ENCODE measurements at regions of chr19 and their contacts with region 1.

Region 1: GRCh38 chr19:55653758-55654539 is 886 bp upstream of the U2AF2 start:
- DNase-seq: peak; percentile 100
- H3K4me3 Mint-ChIP-seq: peak overlapping the region; percentile 88
- H3K27ac Mint-ChIP-seq: peak overlapping the region; percentile 99
- H3K4me1 Mint-ChIP-seq: peaks cover 42% of the 10 kb centered on the region
- H3K27me3 Mint-ChIP-seq: peaks cover 1% of the 10 kb centered on the region

Region 2: DNA sequence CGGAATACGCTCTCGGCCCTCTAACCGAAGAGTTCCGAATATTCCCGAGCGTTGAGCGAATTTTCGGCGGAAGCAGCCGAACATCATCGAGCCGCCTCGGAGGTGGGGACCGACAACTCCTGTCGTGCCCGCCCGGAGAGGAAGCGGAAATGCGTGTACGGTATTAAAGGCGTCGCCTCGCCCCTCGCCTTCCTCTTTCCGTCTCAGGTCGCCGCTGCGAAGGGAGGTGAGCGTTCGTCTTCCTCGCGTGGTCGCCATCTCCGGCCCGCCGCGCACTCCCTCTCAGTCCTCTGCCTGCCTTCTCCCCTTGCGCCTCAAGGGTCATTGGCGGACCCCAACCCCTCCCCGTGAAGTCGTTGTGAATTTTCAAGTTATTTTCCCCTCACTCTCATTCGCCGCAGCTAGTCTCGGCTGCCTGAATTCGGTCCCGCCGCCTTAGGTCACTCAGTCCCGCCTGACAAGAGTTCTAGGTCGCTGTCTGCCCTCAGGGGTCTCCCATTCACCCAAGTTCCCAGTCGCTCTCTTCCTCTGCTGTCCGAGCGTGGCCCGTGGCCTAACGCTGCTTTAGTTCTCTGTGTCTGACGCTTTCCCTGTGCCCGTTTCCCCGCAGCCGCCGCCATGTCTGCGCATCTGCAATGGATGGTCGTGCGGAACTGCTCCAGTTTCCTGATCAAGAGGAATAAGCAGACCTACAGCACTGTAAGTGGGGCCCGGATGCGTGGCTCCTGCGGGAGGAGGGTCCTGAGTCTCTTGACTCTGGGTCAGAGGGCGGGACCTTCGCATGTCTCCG is 268.0 kb before region 1 on chr19 and contains the start of gene RPL28:
- intact Hi-C with region 1: loop called (anchors 1 kb)
- DNase-seq: peak; percentile 100
- H3K4me3 Mint-ChIP-seq: peak within 1 kb of the TSS; percentile 97
- H3K27ac Mint-ChIP-seq: peak within 1 kb of the TSS; percentile 98
- H3K4me1 Mint-ChIP-seq: peaks cover 52% of the 10 kb centered on the region
- H3K27me3 Mint-ChIP-seq: no peaks in the 10 kb centered on the region
- total RNA-seq, gene RPL28: 1,992 and 2,022 TPM in 2 replicates

Region 3: DNA sequence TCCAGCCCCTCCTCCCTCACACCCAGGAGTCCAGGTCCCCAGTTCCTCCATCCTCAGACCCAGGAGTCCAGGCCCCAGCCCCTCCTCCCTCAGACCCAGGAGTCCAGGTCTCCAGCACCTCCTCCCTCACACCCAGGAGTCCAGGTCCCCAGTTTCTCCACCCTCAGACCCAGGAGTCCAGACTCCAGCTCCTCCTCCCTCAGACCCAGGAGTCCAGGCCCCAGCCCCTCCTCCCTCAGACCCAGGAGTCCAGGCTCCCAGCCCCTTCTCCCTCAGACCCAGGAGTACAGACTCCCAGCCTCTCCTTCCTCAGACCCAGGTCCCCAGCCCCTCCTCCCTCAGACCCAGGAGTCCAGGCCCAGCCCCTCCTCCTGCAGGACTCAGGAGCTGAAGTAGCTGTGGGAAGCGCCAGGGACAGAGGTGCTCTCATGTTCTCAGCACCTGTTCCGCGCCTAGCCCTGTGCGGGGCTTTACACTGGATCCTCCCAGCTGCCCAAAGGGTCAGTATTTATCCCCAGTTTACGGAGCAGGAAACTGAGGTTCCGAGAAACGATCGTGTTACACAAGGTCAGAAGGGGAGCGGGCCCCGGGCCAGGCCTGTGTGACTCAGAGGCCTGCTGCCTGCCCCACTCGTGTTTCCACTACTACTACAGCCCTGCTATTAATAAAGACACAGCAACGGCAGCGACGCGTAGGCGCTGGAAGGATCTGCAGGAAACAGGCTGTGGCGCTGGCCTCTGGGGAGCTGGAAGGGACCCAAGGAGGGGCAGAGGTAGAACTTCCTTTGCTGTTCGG is 106.9 kb before region 1 on chr19:
- intact Hi-C with region 1: no loop called
- DNase-seq: no peak
- H3K4me3 Mint-ChIP-seq: no peak overlapping the region
- H3K27ac Mint-ChIP-seq: no peak overlapping the region
- H3K4me1 Mint-ChIP-seq: peaks cover 3% of the 10 kb centered on the region
- H3K27me3 Mint-ChIP-seq: peaks cover 3% of the 10 kb centered on the region

Region 4: DNA sequence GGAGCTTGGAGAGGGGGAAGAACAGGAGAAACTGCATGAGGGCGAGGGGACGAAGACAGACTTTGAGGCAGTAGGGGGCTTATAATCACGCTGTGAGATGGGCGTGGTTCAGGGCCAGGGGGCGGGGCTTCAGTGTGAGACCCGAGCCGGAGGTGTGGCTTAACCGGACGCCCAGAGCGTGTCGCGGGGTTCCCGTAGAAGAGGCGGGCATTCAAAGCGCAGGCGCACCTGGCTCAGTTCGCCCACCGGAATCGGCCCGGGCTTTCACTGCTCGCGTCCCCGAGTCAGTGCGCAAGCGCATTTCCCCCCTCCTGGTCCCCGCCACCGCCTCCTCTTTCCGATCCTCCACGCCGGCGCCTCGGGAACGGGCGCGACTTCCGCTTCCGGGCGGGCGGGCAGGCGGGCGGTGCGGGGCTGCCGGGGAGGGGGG is 48.7 kb before region 1 on chr19:
- intact Hi-C with region 1: loop called (anchors 1 kb)
- DNase-seq: peak; percentile 100
- H3K4me3 Mint-ChIP-seq: peak overlapping the region; percentile 85
- H3K27ac Mint-ChIP-seq: peak overlapping the region; percentile 93
- H3K4me1 Mint-ChIP-seq: peaks cover 46% of the 10 kb centered on the region
- H3K27me3 Mint-ChIP-seq: peaks cover 3% of the 10 kb centered on the region

Region 5: GRCh38 chr19:55632463-55632834 is 21.5 kb before region 1 on chr19:
- intact Hi-C with region 1: loop called (anchors 1 kb)
- DNase-seq: peak; percentile 97
- H3K4me3 Mint-ChIP-seq: no peak overlapping the region
- H3K27ac Mint-ChIP-seq: peak overlapping the region; percentile 3
- H3K4me1 Mint-ChIP-seq: peaks cover 38% of the 10 kb centered on the region
- H3K27me3 Mint-ChIP-seq: peaks cover 13% of the 10 kb centered on the region

Region 6: GRCh38 chr19:55674841-55675660 is 21.1 kb after region 1 on chr19 and contains the start of gene EPN1:
- intact Hi-C with region 1: loop called (anchors 1 kb)
- DNase-seq: peak; percentile 99
- H3K4me3 Mint-ChIP-seq: peak within 1 kb of the TSS; percentile 95
- H3K27ac Mint-ChIP-seq: peak within 1 kb of the TSS; percentile 90
- H3K4me1 Mint-ChIP-seq: peaks cover 52% of the 10 kb centered on the region
- H3K27me3 Mint-ChIP-seq: no peaks in the 10 kb centered on the region
- total RNA-seq, gene EPN1: 44.7 and 45.4 TPM in 2 replicates

Region 7: DNA sequence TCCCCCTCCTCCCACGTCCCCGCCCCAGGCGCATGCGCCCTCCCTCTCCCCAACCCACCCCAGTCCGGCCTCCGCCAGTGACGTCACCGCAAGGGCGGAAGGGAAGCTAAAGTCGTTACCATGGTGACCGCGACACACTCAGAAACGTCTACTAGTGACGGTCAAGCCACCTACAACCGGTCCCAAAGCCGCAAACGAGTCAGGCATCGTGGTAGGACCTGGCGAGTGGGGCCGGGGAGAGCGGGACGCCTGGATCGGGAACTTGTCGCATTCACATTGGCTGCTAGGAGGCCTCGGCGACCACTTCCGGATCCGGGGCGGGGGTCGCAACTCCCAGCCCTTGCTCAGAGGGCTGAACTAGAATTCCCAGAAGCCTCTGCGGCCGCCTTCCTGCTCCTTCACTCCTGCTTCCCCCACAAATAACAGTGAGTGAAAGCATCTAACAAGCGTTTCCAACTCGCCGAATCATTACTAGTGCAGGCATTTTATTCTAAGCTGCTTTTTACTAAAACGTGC is 660.7 kb after region 1 on chr19 and contains the start of gene ZSCAN5A:
- intact Hi-C with region 1: loop called (anchors 10 kb)
- DNase-seq: peak; percentile 98
- H3K4me3 Mint-ChIP-seq: peak within 1 kb of the TSS; percentile 98
- H3K27ac Mint-ChIP-seq: peak within 1 kb of the TSS; percentile 99
- H3K4me1 Mint-ChIP-seq: peaks cover 33% of the 10 kb centered on the region
- H3K27me3 Mint-ChIP-seq: no peaks in the 10 kb centered on the region
- total RNA-seq, gene ZSCAN5A: 6.9 and 10.8 TPM in 2 replicates